PC-9 (cell line): ENCODE measurements at regions of chr20 and their contacts with region 1.

Region 1: DNA sequence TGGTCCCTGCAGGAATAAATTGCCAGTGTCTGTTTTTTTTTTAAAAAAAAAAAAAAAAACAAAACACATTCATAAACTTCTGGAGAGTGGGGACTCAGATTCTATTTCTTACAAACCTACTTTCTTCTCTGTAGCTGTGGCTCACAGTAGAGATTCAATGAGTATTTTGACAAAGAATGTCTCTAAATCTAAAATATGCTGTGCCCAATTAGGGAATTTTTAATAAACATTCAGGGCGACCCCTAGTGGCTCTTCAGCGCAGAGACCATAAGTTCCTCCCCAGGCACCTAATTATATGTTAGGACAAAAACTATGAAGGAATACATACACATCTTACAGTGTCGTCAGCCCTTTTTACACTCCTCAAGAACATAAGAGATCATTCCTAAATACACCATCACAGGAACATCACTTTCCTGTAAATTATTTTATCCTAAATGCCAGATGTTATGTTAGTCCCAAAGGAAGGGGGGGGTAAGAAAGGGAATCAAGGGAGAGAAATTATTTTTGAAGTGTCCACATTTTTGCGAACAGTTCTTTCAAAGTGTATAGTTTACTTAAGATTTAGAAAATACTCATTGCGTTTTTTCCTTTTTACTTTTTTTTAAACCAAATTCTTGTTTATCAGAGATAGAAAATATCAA is 21.8 kb upstream of the NAA20 start:
- DNase-seq: no peak
- H3K4me3 ChIP-seq: no peak overlapping the region
- H3K27ac ChIP-seq: peak overlapping the region; percentile 100
- H3K4me1 ChIP-seq: peaks cover 51% of the 10 kb centered on the region
- H3K27me3 ChIP-seq: no peaks in the 10 kb centered on the region
- CTCF ChIP-seq: peak; percentile 93

Region 2: GRCh38 chr20:19757487-19758132 is 237.7 kb before region 1 on chr20:
- CTCF ChIA-PET with region 1: no interaction called
- POLR2A ChIA-PET with region 1: no interaction called
- intact Hi-C with region 1: loop called (anchors 2 kb)
- DNase-seq: peak; percentile 71 to 79
- H3K4me3 ChIP-seq: peak overlapping the region; percentile 82
- H3K27ac ChIP-seq: peak overlapping the region; percentile 99
- H3K4me1 ChIP-seq: peaks cover 38% of the 10 kb centered on the region
- H3K27me3 ChIP-seq: no peaks in the 10 kb centered on the region
- CTCF ChIP-seq: no peak

Region 3: DNA sequence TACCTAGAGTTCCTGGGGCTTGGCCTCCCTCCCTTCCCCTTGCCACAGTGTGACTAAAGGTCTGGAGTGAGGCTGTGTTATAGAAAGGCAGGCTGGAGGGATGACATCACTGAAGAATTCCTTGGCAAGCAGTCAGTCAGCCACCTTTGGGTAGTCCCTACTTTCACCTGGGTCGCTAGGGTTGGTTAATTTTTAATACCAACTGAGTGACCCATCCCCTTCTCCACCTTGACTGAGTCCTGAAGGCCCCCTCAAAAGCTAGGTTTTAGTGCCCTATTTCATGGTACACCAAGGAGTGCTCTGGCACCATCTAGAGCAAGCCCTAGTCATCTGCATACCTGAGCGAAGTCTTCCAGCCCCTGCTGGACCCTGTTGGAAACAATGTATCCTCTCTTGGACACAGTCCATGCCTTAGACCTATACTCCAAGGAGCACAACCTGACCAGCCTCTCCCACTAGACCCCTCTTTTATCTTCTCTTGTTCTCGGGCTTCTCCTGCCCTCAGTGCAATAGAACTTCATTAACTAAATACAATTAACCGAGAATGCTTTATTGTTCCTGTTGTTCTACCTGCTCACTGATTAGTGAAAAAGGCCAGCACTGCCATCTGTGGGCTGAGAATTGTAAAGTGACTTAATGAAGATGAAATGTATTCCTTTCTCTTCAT is 192.7 kb before region 1 on chr20:
- CTCF ChIA-PET with region 1: interaction called, 4 read pairs
- POLR2A ChIA-PET with region 1: interaction called, 3 read pairs
- intact Hi-C with region 1: loop called (anchors 2 kb)
- DNase-seq: peak; percentile 59 to 68
- H3K4me3 ChIP-seq: no peak overlapping the region
- H3K27ac ChIP-seq: peak overlapping the region; percentile 33; the same call in 1 of the 2 replicates
- H3K4me1 ChIP-seq: peaks cover 17% of the 10 kb centered on the region
- H3K27me3 ChIP-seq: no peaks in the 10 kb centered on the region
- CTCF ChIP-seq: peak; percentile 71

Region 4: GRCh38 chr20:19880256-19881079 is 114.9 kb before region 1 on chr20:
- CTCF ChIA-PET with region 1: interaction called, 7 read pairs
- POLR2A ChIA-PET with region 1: interaction called, 13 read pairs
- intact Hi-C with region 1: loop called (anchors 1 kb)
- DNase-seq: peak; percentile 54 to 94
- H3K4me3 ChIP-seq: peak overlapping the region; percentile 38; the same call in 1 of the 2 replicates
- H3K27ac ChIP-seq: peak overlapping the region; percentile 96
- H3K4me1 ChIP-seq: peaks cover 58% of the 10 kb centered on the region
- H3K27me3 ChIP-seq: no peaks in the 10 kb centered on the region
- CTCF ChIP-seq: no peak

Region 5: GRCh38 chr20:19934792-19935491 is 60.4 kb before region 1 on chr20:
- CTCF ChIA-PET with region 1: no interaction called
- POLR2A ChIA-PET with region 1: interaction called, 11 read pairs
- intact Hi-C with region 1: loop called (anchors 2 kb)
- DNase-seq: peak; percentile 62 to 73
- H3K4me3 ChIP-seq: peak overlapping the region; percentile 48; the same call in 1 of the 2 replicates
- H3K27ac ChIP-seq: peak overlapping the region; percentile 86
- H3K4me1 ChIP-seq: peaks cover 32% of the 10 kb centered on the region
- H3K27me3 ChIP-seq: no peaks in the 10 kb centered on the region
- CTCF ChIP-seq: no peak

Region 6: GRCh38 chr20:20017001-20017843 is 21.9 kb after region 1 on chr20 and contains the start of gene NAA20:
- CTCF ChIA-PET with region 1: interaction called, 4 read pairs
- POLR2A ChIA-PET with region 1: interaction called, 3 read pairs
- intact Hi-C with region 1: loop called (anchors 2 kb)
- DNase-seq: peak; percentile 85 to 96
- H3K4me3 ChIP-seq: peak within 1 kb of the TSS; percentile 99
- H3K27ac ChIP-seq: peak within 1 kb of the TSS; percentile 74
- H3K4me1 ChIP-seq: peaks cover 26% of the 10 kb centered on the region
- H3K27me3 ChIP-seq: no peaks in the 10 kb centered on the region
- CTCF ChIP-seq: peak; percentile 51; the same call in 1 of the 2 replicates
- total RNA-seq, gene NAA20: 167 and 168 TPM in 2 replicates